MCF 10A (cell line): ENCODE measurements at regions of chr5 and their contacts with region 1.

Region 1: GRCh38 chr5:149834246-149834855 is 104.2 kb downstream of the PPARGC1B start:
- DNase-seq: peak; percentile 87
- H3K4me3 Mint-ChIP-seq: no peak overlapping the region
- H3K27ac Mint-ChIP-seq: peak overlapping the region; percentile 42
- H3K4me1 Mint-ChIP-seq: peaks cover 17% of the 10 kb centered on the region
- H3K27me3 Mint-ChIP-seq: no peaks in the 10 kb centered on the region
- CTCF ChIP-seq: peak; percentile 92

Region 2: DNA sequence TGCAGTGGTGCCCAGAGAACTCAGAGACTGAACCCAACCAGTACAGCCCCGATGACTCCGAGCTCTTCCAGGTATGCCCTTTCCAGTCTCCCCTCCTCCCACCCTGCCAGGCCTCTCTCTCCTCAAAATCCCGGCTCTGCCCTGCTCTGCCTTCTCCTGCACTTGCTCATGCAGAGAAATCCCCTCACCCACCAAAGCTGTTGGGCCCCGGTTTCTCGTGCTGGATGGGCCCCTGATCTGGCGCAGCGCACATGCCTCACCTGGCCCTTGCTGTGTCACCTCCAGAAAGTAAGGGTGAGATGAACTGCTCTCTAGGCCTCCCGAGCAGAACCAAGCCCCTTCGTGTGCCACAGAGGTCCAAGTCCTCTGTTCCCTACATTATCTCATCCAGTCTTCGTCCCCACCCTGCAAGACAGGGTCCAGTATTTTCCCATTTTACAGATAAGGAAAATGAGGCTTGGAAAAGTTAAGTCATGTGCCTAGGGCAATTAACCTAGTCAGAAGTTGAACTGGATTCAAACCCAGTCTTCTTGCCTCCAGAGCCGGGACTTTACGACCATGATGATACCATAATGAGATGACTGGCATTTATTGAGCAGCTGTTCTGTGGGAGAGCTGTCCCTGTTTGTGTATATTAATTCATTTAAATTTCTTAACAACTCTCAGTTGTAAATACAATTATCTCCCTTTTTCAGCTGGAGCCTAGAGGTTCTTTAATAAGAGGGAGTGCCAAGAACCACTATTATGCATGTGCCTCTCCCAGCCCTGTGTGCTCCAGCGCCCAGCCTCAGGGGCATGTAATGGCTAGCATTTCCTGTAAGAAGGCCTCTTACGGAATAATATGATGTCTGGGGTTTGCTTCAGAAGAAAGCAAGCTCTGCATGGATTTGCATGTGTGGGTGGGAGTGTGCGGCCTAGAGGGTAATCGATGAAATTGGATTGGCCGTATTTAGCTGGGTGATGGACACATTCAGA is 13.5 kb before region 1 on chr5:
- CTCF ChIA-PET with region 1: interaction called, 48 read pairs
- POLR2A ChIA-PET with region 1: interaction called, 3 read pairs
- intact Hi-C with region 1: no loop called
- DNase-seq: no peak
- H3K4me3 Mint-ChIP-seq: no peak overlapping the region
- H3K27ac Mint-ChIP-seq: no peak overlapping the region
- H3K4me1 Mint-ChIP-seq: peaks cover 6% of the 10 kb centered on the region
- H3K27me3 Mint-ChIP-seq: no peaks in the 10 kb centered on the region
- CTCF ChIP-seq: no peak

Region 3: DNA sequence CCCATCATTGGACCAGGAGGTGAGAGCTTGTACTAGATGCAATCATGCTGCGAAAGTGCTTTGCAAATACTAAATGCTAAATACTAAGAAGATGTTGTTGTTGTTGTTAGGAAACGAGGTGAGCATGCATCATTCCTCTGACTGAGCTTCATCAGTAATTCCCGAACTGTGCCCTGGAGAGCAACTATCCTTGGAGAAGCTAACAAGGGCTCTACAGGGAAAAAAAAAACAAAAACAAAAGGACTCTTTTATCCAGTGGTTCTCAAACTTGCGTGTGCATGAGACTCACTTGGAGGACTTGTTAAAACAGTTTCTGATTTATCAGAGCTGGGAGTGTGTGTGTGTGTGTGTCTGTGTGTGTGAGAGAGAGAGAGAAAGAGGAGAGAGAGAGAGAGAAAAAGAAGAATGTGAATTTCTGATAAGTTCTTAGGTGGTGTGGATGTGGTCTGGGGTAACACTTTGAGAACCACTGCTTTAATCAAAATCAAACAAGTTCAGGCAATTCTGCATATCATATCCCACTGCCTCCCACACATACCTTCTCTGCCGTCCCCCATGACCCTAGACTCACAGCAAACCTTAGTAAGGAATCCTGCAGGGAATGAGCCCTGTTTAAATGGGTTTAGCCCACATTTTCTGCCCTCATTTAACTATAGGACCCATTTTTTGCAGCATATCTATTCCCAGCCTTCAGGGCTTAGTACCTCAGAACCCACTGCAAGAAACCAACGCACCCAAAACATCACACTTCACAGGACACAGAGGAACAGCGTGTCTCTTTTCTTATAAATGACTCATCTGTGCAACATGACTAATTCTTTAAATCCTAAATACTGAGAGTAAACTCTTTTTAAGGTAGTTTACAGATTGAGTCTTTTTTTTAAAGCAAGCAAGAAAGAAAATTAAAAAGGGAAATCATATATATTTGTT is 61.3 kb after region 1 on chr5:
- CTCF ChIA-PET with region 1: interaction called, 13 read pairs
- POLR2A ChIA-PET with region 1: interaction called, 11 read pairs
- intact Hi-C with region 1: no loop called
- DNase-seq: peak; percentile 87
- H3K4me3 Mint-ChIP-seq: peak overlapping the region; percentile 40
- H3K27ac Mint-ChIP-seq: peak overlapping the region; percentile 84
- H3K4me1 Mint-ChIP-seq: peaks cover 42% of the 10 kb centered on the region
- H3K27me3 Mint-ChIP-seq: no peaks in the 10 kb centered on the region
- CTCF ChIP-seq: no peak

Region 4: GRCh38 chr5:149932445-149933350 is 98.3 kb after region 1 on chr5:
- CTCF ChIA-PET with region 1: interaction called, 10 read pairs
- POLR2A ChIA-PET with region 1: interaction called, 14 read pairs
- intact Hi-C with region 1: no loop called
- DNase-seq: no peak
- H3K4me3 Mint-ChIP-seq: no peak overlapping the region
- H3K27ac Mint-ChIP-seq: no peak overlapping the region
- H3K4me1 Mint-ChIP-seq: peaks cover 51% of the 10 kb centered on the region
- H3K27me3 Mint-ChIP-seq: no peaks in the 10 kb centered on the region
- CTCF ChIP-seq: no peak

Region 5: GRCh38 chr5:149990518-149991376 is 156.4 kb after region 1 on chr5:
- CTCF ChIA-PET with region 1: interaction called, 195 read pairs
- POLR2A ChIA-PET with region 1: interaction called, 18 read pairs
- intact Hi-C with region 1: loop called (anchors 1 kb)
- DNase-seq: peak; percentile 91
- H3K4me3 Mint-ChIP-seq: no peak overlapping the region
- H3K27ac Mint-ChIP-seq: no peak overlapping the region
- H3K4me1 Mint-ChIP-seq: peaks cover 10% of the 10 kb centered on the region
- H3K27me3 Mint-ChIP-seq: no peaks in the 10 kb centered on the region
- CTCF ChIP-seq: peak; percentile 96

Region 6: DNA sequence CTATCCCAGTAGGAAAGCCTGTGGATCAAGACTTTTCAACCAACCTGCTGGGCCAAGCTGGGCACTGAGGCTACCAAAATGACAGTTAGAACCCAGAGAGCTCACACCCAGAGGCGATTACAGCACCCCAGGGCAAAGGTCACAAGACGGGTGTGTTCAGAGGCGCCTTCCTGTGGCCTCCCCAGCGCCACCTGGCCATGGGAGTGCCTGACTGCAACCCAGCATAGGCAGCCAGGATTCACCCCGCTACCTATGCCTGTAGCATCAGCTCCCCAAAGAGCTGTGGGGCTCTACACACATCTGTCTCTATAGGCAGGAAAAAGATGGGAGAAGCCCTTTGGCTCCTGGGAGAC is 287.8 kb after region 1 on chr5:
- CTCF ChIA-PET with region 1: no interaction called
- POLR2A ChIA-PET with region 1: no interaction called
- intact Hi-C with region 1: loop called (anchors 5 kb)
- DNase-seq: peak; percentile 63
- H3K4me3 Mint-ChIP-seq: no peak overlapping the region
- H3K27ac Mint-ChIP-seq: peak overlapping the region; percentile 2
- H3K4me1 Mint-ChIP-seq: peaks cover 9% of the 10 kb centered on the region
- H3K27me3 Mint-ChIP-seq: no peaks in the 10 kb centered on the region
- CTCF ChIP-seq: peak; percentile 62

Region 7: DNA sequence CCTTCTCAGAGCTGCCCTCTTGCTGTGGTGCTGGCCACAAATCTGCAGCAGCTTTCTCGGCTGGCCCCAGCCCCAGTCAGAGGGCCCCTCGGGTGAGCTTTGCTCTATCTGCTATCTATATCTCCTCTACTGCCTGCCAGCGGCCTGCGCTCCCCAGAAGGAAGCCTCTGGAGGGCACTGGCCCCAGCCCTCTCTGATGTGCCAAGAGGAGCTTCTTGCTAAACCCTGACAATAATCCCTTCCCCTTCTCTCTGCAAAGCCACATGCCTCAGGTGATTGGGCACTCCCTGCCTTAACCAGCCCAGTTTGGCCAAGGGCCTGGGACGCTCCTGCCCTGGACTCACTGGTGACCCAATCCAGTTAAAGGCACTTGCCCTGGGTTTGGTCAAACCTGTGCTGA is 412.5 kb after region 1 on chr5:
- CTCF ChIA-PET with region 1: no interaction called
- POLR2A ChIA-PET with region 1: no interaction called
- intact Hi-C with region 1: no loop called
- DNase-seq: peak; percentile 34
- H3K4me3 Mint-ChIP-seq: no peak overlapping the region
- H3K27ac Mint-ChIP-seq: no peak overlapping the region
- H3K4me1 Mint-ChIP-seq: peaks cover 7% of the 10 kb centered on the region
- H3K27me3 Mint-ChIP-seq: no peaks in the 10 kb centered on the region
- CTCF ChIP-seq: no peak